GM10248 (cell line): ENCODE measurements at regions of chrX and their contacts with region 1.

Region 1: GRCh38 chrX:41558531-41558930 is 111.4 kb downstream of the NYX start:
- DNase-seq: peak; percentile 23
- CTCF ChIP-seq: peak; percentile 32

Region 2: GRCh38 chrX:41275661-41276609 is 282.6 kb before region 1 on chrX:
- CTCF ChIA-PET with region 1: no interaction called
- POLR2A ChIA-PET with region 1: no interaction called
- DNase-seq: peak; percentile 75
- CTCF ChIP-seq: peak; percentile 35

Region 3: DNA sequence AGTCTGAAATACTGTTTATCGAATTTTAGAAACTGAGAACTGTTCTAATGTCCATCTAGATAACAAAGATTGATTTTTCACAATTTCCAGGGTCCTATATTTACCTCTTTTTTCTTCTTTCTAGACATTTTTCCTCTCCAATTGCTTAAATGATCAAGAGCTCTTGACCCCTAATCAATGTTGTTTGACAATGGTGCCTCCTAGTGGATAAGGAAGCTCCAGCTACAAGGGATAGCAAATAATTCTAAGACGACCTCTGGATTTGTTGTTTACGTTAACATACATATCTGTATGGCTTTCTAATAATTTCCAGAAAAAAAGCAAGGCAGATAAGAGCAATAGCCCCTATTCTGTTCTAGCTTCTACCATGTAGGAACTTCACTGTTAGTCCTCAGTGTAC is 201.3 kb after region 1 on chrX:
- CTCF ChIA-PET with region 1: interaction called, 25 read pairs
- POLR2A ChIA-PET with region 1: no interaction called
- DNase-seq: peak; percentile 25
- CTCF ChIP-seq: peak; percentile 48